Panc1 (cell line): ENCODE measurements at regions of chr7 and their contacts with region 1.

Region 1: DNA sequence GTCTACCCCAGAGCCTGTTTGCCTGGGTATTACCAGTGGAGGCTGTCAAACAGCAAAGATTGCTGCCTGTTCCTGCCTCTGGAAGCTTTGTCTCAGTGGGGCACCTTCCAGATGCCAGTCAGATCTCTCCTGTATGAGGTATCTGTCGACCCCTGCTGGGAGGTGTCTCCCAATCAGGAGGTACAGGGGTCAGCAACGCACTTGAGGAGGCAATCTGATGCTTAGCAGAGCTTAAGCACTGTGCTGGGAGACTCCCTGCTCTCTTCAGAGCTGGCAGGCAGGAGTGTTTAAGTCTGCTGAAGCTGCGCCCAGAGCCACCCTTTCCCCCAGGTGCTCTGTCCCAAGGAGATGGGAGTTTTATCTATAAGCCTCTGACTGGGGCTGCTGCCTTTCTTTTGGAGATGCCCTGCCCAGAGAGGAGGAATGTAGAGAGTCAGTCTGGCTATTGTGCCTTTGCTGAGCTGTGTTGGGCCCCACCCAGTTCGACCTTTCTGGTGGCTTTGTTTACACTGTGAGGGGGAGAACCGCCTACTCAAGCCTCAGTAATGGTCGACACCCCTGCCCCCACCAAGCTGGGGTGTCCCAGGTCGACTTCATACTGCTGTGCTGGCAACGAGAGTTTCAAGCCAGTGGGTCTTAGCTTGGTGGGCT is 62.2 kb downstream of the PPP1R9A start:
- DNase-seq: no peak
- ATAC-seq: no peak
- H3K4me3 ChIP-seq: no peak overlapping the region
- H3K27ac ChIP-seq: no peak overlapping the region
- H3K4me1 ChIP-seq: no peaks in the 10 kb centered on the region
- H3K27me3 ChIP-seq: no peaks in the 10 kb centered on the region
- CTCF ChIP-seq: no peak

Region 2: DNA sequence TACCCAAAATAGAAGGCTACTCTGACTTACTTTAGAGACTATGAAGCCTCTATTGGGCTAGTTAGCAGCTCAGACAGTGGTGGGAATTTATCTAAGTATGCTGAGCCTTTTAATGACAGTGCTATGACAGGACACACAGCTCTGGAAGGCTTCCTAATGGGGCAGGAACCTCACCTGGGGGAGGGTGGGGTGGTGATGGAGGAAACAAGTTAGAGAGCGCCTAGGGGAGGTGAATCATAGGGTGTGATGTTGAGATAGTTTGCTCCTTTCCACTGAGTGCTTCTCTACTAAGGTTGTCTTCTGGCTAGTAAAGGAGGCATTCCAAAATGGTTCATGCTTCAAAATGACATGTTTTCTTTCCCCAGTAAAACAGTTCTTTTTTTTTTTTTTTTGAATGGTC is 20.0 kb before region 1 on chr7:
- CTCF ChIA-PET with region 1: no interaction called
- POLR2A ChIA-PET with region 1: no interaction called
- in situ Hi-C with region 1: no loop called
- intact Hi-C with region 1: no loop called
- DNase-seq: no peak
- ATAC-seq: no peak
- H3K4me3 ChIP-seq: no peak overlapping the region
- H3K27ac ChIP-seq: no peak overlapping the region
- H3K4me1 ChIP-seq: no peaks in the 10 kb centered on the region
- H3K27me3 ChIP-seq: no peaks in the 10 kb centered on the region
- CTCF ChIP-seq: no peak

Region 3: GRCh38 chr7:94997547-94997946 is 28.0 kb after region 1 on chr7:
- CTCF ChIA-PET with region 1: no interaction called
- POLR2A ChIA-PET with region 1: interaction called, 13 read pairs
- in situ Hi-C with region 1: no loop called
- intact Hi-C with region 1: no loop called
- DNase-seq: no peak
- ATAC-seq: no peak
- H3K4me3 ChIP-seq: no peak overlapping the region
- H3K27ac ChIP-seq: no peak overlapping the region
- H3K4me1 ChIP-seq: no peaks in the 10 kb centered on the region
- H3K27me3 ChIP-seq: no peaks in the 10 kb centered on the region
- CTCF ChIP-seq: no peak

Region 4: DNA sequence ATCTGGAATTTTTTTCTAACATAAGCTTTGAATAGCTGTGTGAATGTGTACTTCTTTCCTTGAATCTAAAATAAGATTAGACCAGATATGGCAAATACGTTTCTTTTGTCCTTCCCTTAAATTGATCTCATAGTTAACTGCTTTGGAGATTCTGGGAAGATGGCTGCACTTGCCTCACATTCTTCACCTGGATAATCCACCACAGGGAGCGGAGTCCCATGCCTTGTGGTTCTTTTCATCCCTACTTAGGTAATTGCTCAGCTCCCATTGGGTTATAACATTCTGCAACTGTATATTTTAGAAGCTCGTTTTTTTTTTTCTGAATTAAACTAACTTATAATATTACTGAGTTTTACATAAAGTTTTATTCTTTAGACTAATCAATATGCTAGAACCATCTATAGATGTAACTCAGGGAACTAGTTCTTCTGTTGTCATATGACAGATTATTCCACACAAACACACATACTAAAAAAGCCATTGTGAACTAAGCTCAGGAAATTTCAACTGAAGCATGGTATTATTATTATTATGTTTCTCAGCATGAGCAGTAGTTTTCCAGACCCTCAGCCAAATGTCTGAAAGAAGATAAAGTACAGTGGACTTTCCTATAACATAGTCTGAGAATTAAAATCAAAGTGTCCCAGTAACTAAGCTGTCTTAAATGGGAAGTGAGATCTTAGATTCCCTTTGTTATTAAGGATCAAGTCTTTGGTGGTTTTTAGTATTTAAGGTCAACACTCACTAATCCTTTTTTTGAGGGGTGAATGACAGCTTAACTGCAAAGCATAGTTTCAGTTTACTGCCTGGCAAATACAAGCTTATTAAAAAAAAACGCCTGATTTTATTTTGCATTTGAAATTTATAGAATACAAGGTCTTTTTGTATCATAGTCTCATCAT is 120.1 kb after region 1 on chr7:
- CTCF ChIA-PET with region 1: no interaction called
- POLR2A ChIA-PET with region 1: no interaction called
- in situ Hi-C with region 1: no loop called
- intact Hi-C with region 1: no loop called
- DNase-seq: no peak
- ATAC-seq: no peak
- H3K4me3 ChIP-seq: no peak overlapping the region
- H3K27ac ChIP-seq: no peak overlapping the region
- H3K4me1 ChIP-seq: no peaks in the 10 kb centered on the region
- H3K27me3 ChIP-seq: no peaks in the 10 kb centered on the region
- CTCF ChIP-seq: no peak

Region 5: DNA sequence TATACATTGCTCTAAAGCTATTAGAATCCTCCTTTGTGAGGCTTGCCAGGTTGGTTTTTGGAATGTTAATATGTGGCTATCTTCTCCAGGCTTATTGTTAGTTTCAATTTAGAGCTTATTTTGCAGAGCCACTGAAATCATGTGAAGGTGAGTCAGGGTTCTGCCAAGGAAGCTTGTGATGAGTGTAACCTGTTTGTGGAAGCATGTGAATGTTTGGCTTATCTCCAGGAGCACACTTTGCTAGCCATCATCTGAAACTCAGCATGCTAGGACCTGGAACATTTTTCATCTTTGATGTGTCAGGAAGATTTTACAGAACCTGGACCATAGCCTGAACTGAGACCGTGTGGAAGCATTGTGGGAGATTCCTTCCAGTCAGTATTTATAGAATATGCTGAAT is 135.2 kb after region 1 on chr7:
- CTCF ChIA-PET with region 1: no interaction called
- POLR2A ChIA-PET with region 1: no interaction called
- in situ Hi-C with region 1: no loop called
- intact Hi-C with region 1: no loop called
- DNase-seq: peak; percentile 87
- ATAC-seq: no peak
- H3K4me3 ChIP-seq: no peak overlapping the region
- H3K27ac ChIP-seq: no peak overlapping the region
- H3K4me1 ChIP-seq: no peaks in the 10 kb centered on the region
- H3K27me3 ChIP-seq: no peaks in the 10 kb centered on the region
- CTCF ChIP-seq: no peak